Endothelial cell of umbilical vein (primary cell): ENCODE measurements at regions of chr21 and their contacts with region 1.

Region 1: GRCh38 chr21:44880762-44881585 is 7.5 kb upstream of the PTTG1IP start:
- DNase-seq: peak; percentile 94
- H3K4me3 ChIP-seq: no peak overlapping the region
- H3K27ac ChIP-seq: peak overlapping the region; percentile 98
- H3K4me1 ChIP-seq: peaks cover 45% of the 10 kb centered on the region
- H3K27me3 ChIP-seq: no peaks in the 10 kb centered on the region
- CTCF ChIP-seq: no peak
- POLR2A ChIP-seq: peak; percentile 35

Region 2: GRCh38 chr21:44817914-44818639 is 62.9 kb before region 1 on chr21 and contains the start of gene SUMO3:
- CTCF ChIA-PET with region 1: no interaction called
- POLR2A ChIA-PET with region 1: no interaction called
- dilution Hi-C with region 1: no loop called
- intact Hi-C with region 1: no loop called
- DNase-seq: peak; percentile 80
- H3K4me3 ChIP-seq: peak within 1 kb of the TSS; percentile 67 to 81 (median 71)
- H3K27ac ChIP-seq: peak within 1 kb of the TSS; percentile 59
- H3K4me1 ChIP-seq: peaks cover 4% of the 10 kb centered on the region
- H3K27me3 ChIP-seq: no peaks in the 10 kb centered on the region
- CTCF ChIP-seq: no peak
- POLR2A ChIP-seq: peak; percentile 39
- total RNA-seq, gene SUMO3: 99.7 and 102 TPM in 2 replicates

Region 3: DNA sequence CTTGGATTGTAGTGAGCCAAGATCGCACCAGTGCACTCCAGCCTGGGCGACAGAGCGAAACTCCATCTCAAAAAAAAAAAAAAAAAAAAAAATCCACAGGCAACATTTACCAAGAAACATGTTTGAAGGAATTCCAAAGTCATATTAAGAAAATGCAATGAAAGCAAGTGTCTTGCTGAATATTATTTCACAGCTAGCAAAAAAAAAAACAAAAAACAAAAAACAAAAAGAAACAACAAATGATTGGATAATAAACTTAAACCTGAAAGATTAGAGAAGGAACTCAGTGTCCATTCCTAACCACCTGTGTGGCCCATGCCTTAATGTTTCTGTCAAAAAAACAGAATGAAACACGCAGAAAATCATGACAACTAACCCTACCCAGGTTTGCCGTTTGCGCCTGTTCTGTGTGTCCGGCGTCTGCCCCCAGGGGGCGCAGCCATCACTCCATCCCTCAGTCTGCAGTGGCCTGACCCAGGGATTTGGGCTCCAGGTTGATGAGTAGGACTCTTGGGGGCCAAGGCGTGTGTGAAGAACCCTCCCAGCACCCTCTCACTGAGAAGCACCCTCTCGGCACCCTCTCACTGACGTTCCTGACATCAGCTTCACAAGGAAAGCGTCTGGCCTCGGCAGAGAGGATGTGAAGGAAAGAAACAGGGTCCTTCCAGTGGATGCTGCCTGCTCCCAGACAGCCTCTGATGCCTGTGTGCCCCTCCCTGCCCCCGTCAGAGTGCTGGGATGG is 11.7 kb after region 1 on chr21:
- CTCF ChIA-PET with region 1: interaction called, 47 read pairs
- POLR2A ChIA-PET with region 1: no interaction called
- dilution Hi-C with region 1: no loop called
- intact Hi-C with region 1: no loop called
- DNase-seq: peak; percentile 54
- H3K4me3 ChIP-seq: no peak overlapping the region
- H3K27ac ChIP-seq: no peak overlapping the region
- H3K4me1 ChIP-seq: no peaks in the 10 kb centered on the region
- H3K27me3 ChIP-seq: no peaks in the 10 kb centered on the region
- CTCF ChIP-seq: peak; percentile 91 to 92
- POLR2A ChIP-seq: no peak